CD8-positive, alpha-beta T cell (primary cell): ENCODE measurements at regions of chr7 and their contacts with region 1.

Region 1: DNA sequence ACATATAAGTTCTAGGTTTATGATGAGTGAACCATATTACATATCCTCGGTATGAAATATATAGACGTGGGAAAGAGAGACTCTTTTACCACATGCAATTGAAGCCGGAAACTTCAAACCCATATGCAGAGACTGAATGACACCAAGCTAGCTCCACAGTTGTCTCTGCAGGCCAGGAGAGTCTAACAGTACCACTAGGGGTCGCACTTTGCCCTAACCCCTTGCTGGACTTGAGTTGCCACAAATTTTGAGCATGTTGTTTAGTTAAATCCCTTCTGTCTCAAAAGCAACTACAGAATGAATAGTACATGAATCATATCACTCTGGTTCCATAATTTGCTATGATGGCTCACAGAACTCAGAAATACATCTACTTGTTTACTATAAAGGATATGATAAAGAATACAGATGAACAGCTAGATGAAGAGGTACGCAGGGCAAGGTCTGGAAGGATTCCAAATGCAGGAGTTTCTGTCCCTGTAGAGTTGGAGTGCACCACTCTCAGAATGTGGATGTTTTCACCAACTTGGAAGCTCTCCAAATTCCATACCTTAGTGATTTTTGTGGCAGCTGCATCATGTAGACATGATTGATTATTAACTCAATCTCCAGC is 112.4 kb upstream of the YAE1 start:
- DNase-seq: peak; percentile 6 to 63 (median 46)
- ATAC-seq: peak; percentile 62
- H3K4me3 ChIP-seq: no peak overlapping the region
- H3K4me3 Mint-ChIP-seq: no peak overlapping the region
- H3K27ac ChIP-seq: no peak overlapping the region
- H3K27ac Mint-ChIP-seq: no peak overlapping the region
- H3K4me1 ChIP-seq: no peaks in the 10 kb centered on the region
- H3K4me1 Mint-ChIP-seq: no peaks in the 10 kb centered on the region
- H3K27me3 ChIP-seq: no peaks in the 10 kb centered on the region
- H3K27me3 Mint-ChIP-seq: peaks cover 15% of the 10 kb centered on the region
- CTCF ChIP-seq: peak; percentile 67

Region 2: GRCh38 chr7:39414224-39415035 is 39.4 kb before region 1 on chr7:
- CTCF ChIA-PET with region 1: no interaction called
- POLR2A ChIA-PET with region 1: no interaction called
- intact Hi-C with region 1: no loop called
- DNase-seq: peak in 8 of 9 experiments; percentile 8 to 60 (median 31)
- ATAC-seq: peak; percentile 61
- H3K4me3 ChIP-seq: peak overlapping the region; percentile 44 to 66
- H3K4me3 Mint-ChIP-seq: peak overlapping the region; percentile 81
- H3K27ac ChIP-seq: no peak overlapping the region
- H3K27ac Mint-ChIP-seq: no peak overlapping the region
- H3K4me1 ChIP-seq: no peaks in the 10 kb centered on the region
- H3K4me1 Mint-ChIP-seq: peaks cover 13% of the 10 kb centered on the region
- H3K27me3 ChIP-seq: no peaks in the 10 kb centered on the region
- H3K27me3 Mint-ChIP-seq: peaks cover 20% of the 10 kb centered on the region
- CTCF ChIP-seq: no peak

Region 3: GRCh38 chr7:39465055-39465929 is 11.4 kb after region 1 on chr7:
- CTCF ChIA-PET with region 1: interaction called, 20 read pairs
- POLR2A ChIA-PET with region 1: no interaction called
- intact Hi-C with region 1: no loop called
- DNase-seq: peak in 5 of 9 experiments; percentile 19 to 52 (median 27)
- ATAC-seq: peak; percentile 34
- H3K4me3 ChIP-seq: no peak overlapping the region
- H3K4me3 Mint-ChIP-seq: no peak overlapping the region
- H3K27ac ChIP-seq: no peak overlapping the region
- H3K27ac Mint-ChIP-seq: no peak overlapping the region
- H3K4me1 ChIP-seq: no peaks in the 10 kb centered on the region
- H3K4me1 Mint-ChIP-seq: peaks cover 5% of the 10 kb centered on the region
- H3K27me3 ChIP-seq: no peaks in the 10 kb centered on the region
- H3K27me3 Mint-ChIP-seq: peaks cover 6% of the 10 kb centered on the region
- CTCF ChIP-seq: peak; percentile 55

Region 4: DNA sequence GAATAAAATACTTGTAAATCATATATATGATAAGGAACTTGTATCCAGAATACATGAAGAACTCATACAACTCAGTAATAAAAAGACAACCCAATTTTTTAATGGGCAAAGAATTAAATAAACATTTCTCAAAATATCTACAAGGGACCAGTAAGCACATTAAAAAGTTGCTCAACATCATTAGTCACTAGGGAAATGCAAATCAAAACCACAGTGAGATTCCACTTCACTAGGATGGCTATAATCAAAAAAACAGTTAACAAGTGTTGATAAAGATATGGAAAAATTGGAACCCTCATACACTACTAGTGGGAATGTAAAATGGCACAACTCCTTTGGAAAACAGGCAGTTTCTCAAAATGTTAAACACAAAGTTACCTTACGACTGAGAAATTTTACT is 72.1 kb after region 1 on chr7:
- CTCF ChIA-PET with region 1: interaction called, 5 read pairs
- POLR2A ChIA-PET with region 1: no interaction called
- intact Hi-C with region 1: loop called in 1 of 2 experiments (anchors 2 kb)
- DNase-seq: no peak
- ATAC-seq: no peak
- H3K4me3 ChIP-seq: no peak overlapping the region
- H3K4me3 Mint-ChIP-seq: no peak overlapping the region
- H3K27ac ChIP-seq: no peak overlapping the region
- H3K27ac Mint-ChIP-seq: no peak overlapping the region
- H3K4me1 ChIP-seq: no peaks in the 10 kb centered on the region
- H3K4me1 Mint-ChIP-seq: no peaks in the 10 kb centered on the region
- H3K27me3 ChIP-seq: peaks cover 0 to 1% of the 10 kb centered on the region in 2 experiments
- H3K27me3 Mint-ChIP-seq: peaks cover 14% of the 10 kb centered on the region
- CTCF ChIP-seq: no peak

Region 5: DNA sequence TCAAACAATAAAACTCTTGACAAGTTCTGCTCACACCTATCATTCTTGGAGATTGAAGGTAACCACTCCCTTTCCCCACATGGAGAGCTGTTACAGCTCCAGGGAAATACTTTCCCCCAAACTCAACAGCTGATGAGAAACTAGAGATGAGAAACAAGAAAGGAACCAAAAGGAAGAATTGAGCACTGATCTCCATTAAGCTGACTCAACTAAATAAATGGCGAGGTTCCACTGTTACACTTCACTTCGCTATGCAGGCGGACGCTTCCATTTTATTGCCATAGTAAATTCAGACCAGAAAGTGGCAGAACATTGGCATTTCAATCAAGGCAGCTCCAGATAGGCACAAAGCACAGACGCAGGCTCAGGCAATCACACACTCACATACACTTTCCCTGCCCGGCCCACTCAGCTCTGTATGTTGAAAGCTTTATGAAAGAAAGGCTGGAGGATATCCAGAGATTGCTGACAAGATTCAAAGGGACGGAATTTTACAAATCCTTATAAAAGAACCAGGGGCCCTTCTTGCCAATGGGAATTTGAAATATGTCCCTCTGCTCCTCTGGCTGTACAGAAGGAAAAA is 100.8 kb after region 1 on chr7:
- CTCF ChIA-PET with region 1: no interaction called
- POLR2A ChIA-PET with region 1: no interaction called
- intact Hi-C with region 1: no loop called
- DNase-seq: no peak
- ATAC-seq: no peak
- H3K4me3 ChIP-seq: no peak overlapping the region
- H3K4me3 Mint-ChIP-seq: no peak overlapping the region
- H3K27ac ChIP-seq: no peak overlapping the region
- H3K27ac Mint-ChIP-seq: no peak overlapping the region
- H3K4me1 ChIP-seq: no peaks in the 10 kb centered on the region
- H3K4me1 Mint-ChIP-seq: no peaks in the 10 kb centered on the region
- H3K27me3 ChIP-seq: peaks cover 0 to 3% of the 10 kb centered on the region in 2 experiments
- H3K27me3 Mint-ChIP-seq: peaks cover 5% of the 10 kb centered on the region
- CTCF ChIP-seq: no peak